ENCODE measurements at regions of chr5 and their contacts with region 1.

Region 1: GRCh38 chr5:59640411-59640810 is 253.1 kb downstream of the PDE4D start:
- DNase-seq: peak; percentile 55
- H3K4me3 Mint-ChIP-seq: no peak overlapping the region
- H3K27ac Mint-ChIP-seq: no peak overlapping the region
- H3K4me1 Mint-ChIP-seq: peaks cover 29% of the 10 kb centered on the region
- H3K27me3 Mint-ChIP-seq: no peaks in the 10 kb centered on the region
- CTCF ChIP-seq: no peak

Region 2: GRCh38 chr5:59660737-59661136 is 20.3 kb after region 1 on chr5:
- CTCF ChIA-PET with region 1: interaction called, 10 read pairs
- intact Hi-C with region 1: no loop called
- DNase-seq: peak; percentile 11
- H3K4me3 Mint-ChIP-seq: no peak overlapping the region
- H3K27ac Mint-ChIP-seq: no peak overlapping the region
- H3K4me1 Mint-ChIP-seq: peaks cover 28% of the 10 kb centered on the region
- H3K27me3 Mint-ChIP-seq: no peaks in the 10 kb centered on the region
- CTCF ChIP-seq: peak; percentile 17

Region 3: GRCh38 chr5:59999056-59999455 is 358.6 kb after region 1 on chr5:
- CTCF ChIA-PET with region 1: no interaction called
- intact Hi-C with region 1: no loop called
- DNase-seq: no peak
- H3K4me3 Mint-ChIP-seq: no peak overlapping the region
- H3K27ac Mint-ChIP-seq: no peak overlapping the region
- H3K4me1 Mint-ChIP-seq: no peaks in the 10 kb centered on the region
- H3K27me3 Mint-ChIP-seq: no peaks in the 10 kb centered on the region
- CTCF ChIP-seq: no peak